ENCODE measurements at regions of chr10 and their contacts with region 1.

Region 1: DNA sequence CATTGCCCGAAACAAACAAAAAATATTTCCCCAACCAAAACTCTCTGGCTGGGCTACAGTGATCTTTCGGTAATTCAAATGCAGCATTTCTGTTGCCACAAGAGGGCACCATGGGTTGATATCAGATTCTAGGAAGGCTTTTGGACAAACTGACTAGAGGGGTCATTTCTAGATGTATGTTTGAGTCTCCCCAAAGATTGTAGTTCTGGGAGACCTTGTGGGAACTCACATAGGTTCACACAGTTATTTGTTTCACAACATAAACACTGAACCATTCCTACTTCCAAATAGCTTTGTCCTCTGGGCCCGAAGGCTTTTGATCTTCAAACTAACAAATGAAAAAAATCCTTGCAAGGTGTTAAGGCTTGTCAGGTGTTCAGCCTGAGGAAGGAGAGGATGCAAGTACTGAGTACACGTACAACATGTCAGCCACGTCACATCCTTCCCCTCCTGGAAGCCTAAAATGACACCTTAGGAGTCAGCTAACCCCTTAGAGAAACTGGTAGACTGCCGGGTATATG is 37.0 kb upstream of the IL15RA start:
- DNase-seq: peak; percentile 30
- ATAC-seq: peak; percentile 91
- H3K4me3 ChIP-seq: no peak overlapping the region
- H3K27ac ChIP-seq: no peak overlapping the region
- H3K4me1 ChIP-seq: no peaks in the 10 kb centered on the region
- H3K27me3 ChIP-seq: no peaks in the 10 kb centered on the region; a peak in 1 of 4 replicates
- CTCF ChIP-seq: peak; percentile 68 to 82 (median 77)
- EP300 ChIP-seq: no peak
- POLR2A ChIP-seq: no peak
- RAD21 ChIP-seq: peak; percentile 89

Region 2: GRCh38 chr10:5776136-5776880 is 238.0 kb before region 1 on chr10:
- CTCF ChIA-PET with region 1: no interaction called
- POLR2A ChIA-PET with region 1: no interaction called
- RAD21 ChIA-PET with region 1: no interaction called
- SMC1A ChIA-PET with region 1: no interaction called
- in situ Hi-C with region 1: no loop called
- intact Hi-C with region 1: no loop called
- DNase-seq: no peak
- ATAC-seq: no peak
- H3K4me3 ChIP-seq: no peak overlapping the region
- H3K27ac ChIP-seq: no peak overlapping the region
- H3K4me1 ChIP-seq: no peaks in the 10 kb centered on the region
- H3K27me3 ChIP-seq: no peaks in the 10 kb centered on the region
- CTCF ChIP-seq: no peak
- EP300 ChIP-seq: no peak
- POLR2A ChIP-seq: no peak
- RAD21 ChIP-seq: no peak

Region 3: GRCh38 chr10:6027929-6028328 is 13.6 kb after region 1 on chr10:
- CTCF ChIA-PET with region 1: interaction called, 13 read pairs
- POLR2A ChIA-PET with region 1: interaction called, 3 read pairs
- RAD21 ChIA-PET with region 1: interaction called, 4 read pairs
- SMC1A ChIA-PET with region 1: interaction called, 14 read pairs
- in situ Hi-C with region 1: no loop called
- intact Hi-C with region 1: no loop called
- DNase-seq: no peak
- ATAC-seq: no peak
- H3K4me3 ChIP-seq: no peak overlapping the region
- H3K27ac ChIP-seq: no peak overlapping the region
- H3K4me1 ChIP-seq: no peaks in the 10 kb centered on the region
- H3K27me3 ChIP-seq: no peaks in the 10 kb centered on the region
- CTCF ChIP-seq: no peak
- EP300 ChIP-seq: no peak
- POLR2A ChIP-seq: no peak
- RAD21 ChIP-seq: no peak

Region 4: GRCh38 chr10:6045314-6045848 is 31.1 kb after region 1 on chr10:
- CTCF ChIA-PET with region 1: interaction called, 101 read pairs
- POLR2A ChIA-PET with region 1: interaction called, 3 read pairs
- RAD21 ChIA-PET with region 1: interaction called, 41 read pairs
- SMC1A ChIA-PET with region 1: interaction called, 53 read pairs
- in situ Hi-C with region 1: no loop called
- intact Hi-C with region 1: no loop called
- DNase-seq: no peak
- ATAC-seq: peak; percentile 51
- H3K4me3 ChIP-seq: peak overlapping the region; percentile 9; the same call in 1 of the 2 replicates
- H3K27ac ChIP-seq: no peak overlapping the region; the same call in 1 of the 2 replicates
- H3K4me1 ChIP-seq: peaks cover 44% of the 10 kb centered on the region
- H3K27me3 ChIP-seq: no peaks in the 10 kb centered on the region
- CTCF ChIP-seq: no peak
- EP300 ChIP-seq: no peak; a peak in 1 of 4 replicates
- POLR2A ChIP-seq: no peak
- RAD21 ChIP-seq: no peak

Region 5: DNA sequence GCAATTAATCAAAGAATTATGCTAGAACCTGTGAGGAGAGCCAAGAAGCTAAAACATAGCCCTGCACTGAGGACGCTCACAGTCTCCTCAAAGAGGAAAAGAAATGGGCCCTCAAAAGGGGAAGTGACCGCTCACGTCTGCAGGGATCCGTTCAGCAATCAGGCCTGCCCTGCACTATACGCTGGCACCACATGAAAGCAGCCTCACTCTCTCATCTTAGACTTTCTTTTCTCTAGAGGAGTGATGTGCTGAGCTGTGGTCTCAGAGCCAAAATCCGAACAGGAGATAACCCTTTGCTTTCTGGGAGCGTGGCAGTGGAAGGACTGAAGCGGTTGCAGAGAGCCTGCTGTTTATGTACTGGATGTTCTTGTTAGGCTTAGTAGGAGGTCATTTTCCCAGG is 54.1 kb after region 1 on chr10:
- CTCF ChIA-PET with region 1: interaction called, 17 read pairs
- POLR2A ChIA-PET with region 1: no interaction called
- RAD21 ChIA-PET with region 1: interaction called, 3 read pairs
- SMC1A ChIA-PET with region 1: interaction called, 10 read pairs
- in situ Hi-C with region 1: no loop called
- intact Hi-C with region 1: no loop called
- DNase-seq: no peak
- ATAC-seq: peak; percentile 86
- H3K4me3 ChIP-seq: no peak overlapping the region
- H3K27ac ChIP-seq: no peak overlapping the region
- H3K4me1 ChIP-seq: peaks cover 30% of the 10 kb centered on the region
- H3K27me3 ChIP-seq: no peaks in the 10 kb centered on the region; a peak in 1 of 4 replicates
- CTCF ChIP-seq: no peak
- EP300 ChIP-seq: no peak
- POLR2A ChIP-seq: no peak
- RAD21 ChIP-seq: no peak

Region 6: DNA sequence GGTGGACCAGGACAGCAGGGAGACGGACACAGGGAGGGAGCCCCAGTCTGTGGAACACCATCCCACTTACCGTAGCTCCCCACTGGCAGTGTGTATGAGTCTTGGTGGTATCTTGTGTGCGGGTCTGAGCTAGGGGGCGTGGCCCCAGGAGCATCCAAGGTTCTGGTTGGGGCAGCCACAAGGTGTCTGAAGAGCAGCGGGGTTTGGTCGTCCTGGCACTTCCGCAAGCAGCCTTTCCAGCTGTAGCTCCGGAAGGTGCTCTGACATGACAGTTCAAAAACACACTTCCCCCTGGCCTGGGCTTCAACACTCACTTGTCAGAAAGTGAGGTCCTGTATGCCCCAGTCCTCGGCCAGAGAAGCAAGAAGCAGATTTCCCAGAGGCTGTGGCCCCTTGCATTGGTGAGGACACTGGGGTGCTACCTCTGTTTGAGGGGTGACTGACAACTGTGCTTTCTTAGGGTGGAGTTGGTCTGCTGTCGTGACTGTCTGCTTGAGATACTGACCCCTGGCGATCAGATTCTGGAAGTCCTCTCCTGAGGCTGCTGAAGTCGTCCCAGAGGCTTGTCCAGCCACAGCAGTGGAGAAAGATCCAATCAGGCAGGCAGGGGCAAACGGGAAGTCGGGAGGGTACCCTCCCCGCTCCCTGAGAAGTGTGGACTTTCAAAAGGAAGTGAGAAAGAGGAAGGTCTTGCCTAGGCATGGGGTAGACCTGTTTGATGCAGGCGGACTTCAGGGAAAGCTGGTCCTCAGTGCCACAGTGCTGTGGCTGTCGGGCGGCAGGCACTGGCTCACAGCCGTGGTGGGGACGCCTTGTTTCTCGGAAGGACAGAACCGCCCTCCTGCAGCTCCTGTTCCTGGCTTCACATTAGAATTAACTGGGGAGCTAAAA is 137.0 kb after region 1 on chr10:
- CTCF ChIA-PET with region 1: interaction called, 15 read pairs
- POLR2A ChIA-PET with region 1: no interaction called
- RAD21 ChIA-PET with region 1: no interaction called
- SMC1A ChIA-PET with region 1: interaction called, 3 read pairs
- in situ Hi-C with region 1: no loop called
- intact Hi-C with region 1: no loop called
- DNase-seq: peak; percentile 51
- ATAC-seq: peak; percentile 86
- H3K4me3 ChIP-seq: peak overlapping the region; percentile 9
- H3K27ac ChIP-seq: peak overlapping the region; percentile 8; the same call in 1 of the 2 replicates
- H3K4me1 ChIP-seq: peaks cover 25% of the 10 kb centered on the region
- H3K27me3 ChIP-seq: no peaks in the 10 kb centered on the region
- CTCF ChIP-seq: peak; percentile 71 to 82 (median 81)
- EP300 ChIP-seq: no peak
- POLR2A ChIP-seq: no peak
- RAD21 ChIP-seq: peak; percentile 61